Psoas muscle (tissue), 8 donors: ENCODE measurements at regions of chr2 and their contacts with region 1.

Region 1: GRCh38 chr2:11329781-11330180 is 14.7 kb downstream of the ROCK2 start:
- DNase-seq: no peak
- ATAC-seq: peak in 2 of 4 donors; percentile 63
- H3K4me3 ChIP-seq: peak overlapping the region; percentile 40
- H3K27ac ChIP-seq: peak overlapping the region; percentile 69
- H3K4me1 ChIP-seq: peaks cover 52% of the 10 kb centered on the region
- H3K27me3 ChIP-seq: no peaks in the 10 kb centered on the region
- CTCF ChIP-seq: no peak

Region 2: GRCh38 chr2:11239666-11240462 is 89.9 kb before region 1 on chr2:
- intact Hi-C with region 1: no loop called
- DNase-seq: no peak
- ATAC-seq: peak; percentile 23 to 36 (median 28)
- H3K4me3 ChIP-seq: no peak overlapping the region
- H3K27ac ChIP-seq: no peak overlapping the region
- H3K4me1 ChIP-seq: peaks cover 27% of the 10 kb centered on the region
- H3K27me3 ChIP-seq: no peaks in the 10 kb centered on the region
- CTCF ChIP-seq: no peak

Region 3: DNA sequence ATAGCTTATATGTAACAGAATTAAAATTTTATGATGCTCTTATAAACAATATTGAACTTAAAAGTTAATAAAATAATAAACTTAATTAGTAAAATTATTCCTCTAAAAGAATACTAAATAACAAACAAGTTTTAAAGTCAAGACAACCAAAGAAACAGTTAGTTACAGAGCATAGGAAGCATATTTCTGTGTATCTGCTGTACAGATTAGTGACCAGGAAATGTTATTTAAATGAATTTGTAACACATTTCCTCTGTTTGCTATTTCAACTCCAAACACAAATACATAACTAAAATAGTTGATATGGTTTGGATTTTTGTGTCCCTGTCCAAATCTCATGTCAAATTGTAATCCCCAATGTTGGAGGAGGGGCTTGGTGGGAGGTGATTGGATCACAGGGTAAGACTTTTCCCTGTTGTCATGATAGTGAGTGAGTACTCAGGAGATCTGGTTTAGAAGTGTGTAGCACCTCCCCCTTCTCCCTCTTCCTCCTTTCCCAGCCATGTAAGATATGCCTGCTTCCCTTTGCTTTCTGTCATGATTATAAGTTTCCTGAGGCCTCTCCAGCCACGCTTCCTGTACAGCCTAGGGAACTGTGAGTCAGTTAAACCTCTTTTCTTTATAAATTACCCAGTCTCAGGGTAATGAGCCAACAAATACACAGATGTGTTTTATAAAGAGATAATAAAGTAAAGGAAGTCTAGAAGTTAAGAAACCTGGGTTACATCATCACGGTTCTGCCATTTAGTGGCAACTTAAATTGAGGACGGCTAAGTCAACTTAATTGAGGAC is 37.1 kb before region 1 on chr2:
- intact Hi-C with region 1: loop called in 1 of 2 experiments (anchors 5 kb)
- DNase-seq: no peak
- ATAC-seq: peak in 1 of 4 donors; percentile 16
- H3K4me3 ChIP-seq: no peak overlapping the region
- H3K27ac ChIP-seq: peak overlapping the region; percentile 54
- H3K4me1 ChIP-seq: peaks cover 87% of the 10 kb centered on the region
- H3K27me3 ChIP-seq: no peaks in the 10 kb centered on the region
- CTCF ChIP-seq: no peak